ENCODE measurements at regions of chr1 and their contacts with region 1.

Region 1: DNA sequence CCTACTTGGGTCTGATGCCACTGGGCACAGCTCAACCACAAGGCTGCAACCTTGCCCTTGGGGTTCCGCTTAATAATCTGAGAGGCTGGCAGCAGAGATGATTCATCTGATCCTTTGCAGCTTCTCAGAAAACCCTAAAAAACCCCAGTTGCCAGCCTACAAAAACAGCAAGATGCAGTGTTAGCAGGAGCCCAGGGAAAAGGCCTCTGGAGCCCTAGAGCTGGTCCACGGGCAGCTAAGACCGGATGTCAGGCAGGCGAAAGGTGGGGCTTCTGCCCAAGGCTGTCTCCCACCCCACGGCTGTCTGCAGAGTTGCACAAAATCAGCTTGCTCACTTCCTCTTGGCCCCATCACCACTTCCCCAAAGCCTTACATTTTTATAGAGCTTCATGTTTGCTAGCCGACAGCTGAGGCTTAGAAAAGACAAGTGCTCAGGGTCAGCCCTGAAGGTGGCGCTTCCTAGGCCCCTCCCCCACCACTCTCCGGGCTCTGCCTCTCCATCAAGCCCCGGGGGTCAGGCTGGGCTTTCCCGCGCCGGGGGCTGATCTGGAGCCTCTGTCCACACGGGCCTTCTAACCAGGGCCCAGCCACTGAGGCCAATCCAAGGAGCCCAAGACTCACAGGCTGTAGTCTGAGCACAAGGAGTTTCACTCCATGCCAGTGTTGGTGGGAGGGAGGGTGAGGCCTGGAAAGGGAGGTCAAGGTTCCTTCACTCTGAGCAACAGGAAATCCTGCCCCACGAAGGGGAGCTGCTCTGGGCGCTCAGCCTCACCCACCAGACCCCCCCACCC is 4.2 kb upstream of the ADORA3 start:
- DNase-seq: peak; percentile 27 to 90
- H3K4me3 ChIP-seq: peak overlapping the region; percentile 6 to 59 (median 38); a peak in 7 of 8 replicates
- H3K27ac ChIP-seq: peak overlapping the region; percentile 67; the same call in 1 of the 2 replicates
- H3K4me1 ChIP-seq: peaks cover 0 to 9% (median 3%) of the 10 kb centered on the region in 4 experiments; a peak in 5 of 7 replicates
- H3K27me3 ChIP-seq: no peaks in the 10 kb centered on the region; a peak in 1 of 7 replicates
- CTCF ChIP-seq: peak; percentile 35 to 38 (median 36)
- EP300 ChIP-seq: no peak
- POLR2A ChIP-seq: 0 out of 3 replicates have a peak, but pooled peaks of 1 of the 2 experiments have one; percentile 10
- RAD21 ChIP-seq: peak; percentile 19 to 20; a peak in 1 of 4 replicates

Region 2: DNA sequence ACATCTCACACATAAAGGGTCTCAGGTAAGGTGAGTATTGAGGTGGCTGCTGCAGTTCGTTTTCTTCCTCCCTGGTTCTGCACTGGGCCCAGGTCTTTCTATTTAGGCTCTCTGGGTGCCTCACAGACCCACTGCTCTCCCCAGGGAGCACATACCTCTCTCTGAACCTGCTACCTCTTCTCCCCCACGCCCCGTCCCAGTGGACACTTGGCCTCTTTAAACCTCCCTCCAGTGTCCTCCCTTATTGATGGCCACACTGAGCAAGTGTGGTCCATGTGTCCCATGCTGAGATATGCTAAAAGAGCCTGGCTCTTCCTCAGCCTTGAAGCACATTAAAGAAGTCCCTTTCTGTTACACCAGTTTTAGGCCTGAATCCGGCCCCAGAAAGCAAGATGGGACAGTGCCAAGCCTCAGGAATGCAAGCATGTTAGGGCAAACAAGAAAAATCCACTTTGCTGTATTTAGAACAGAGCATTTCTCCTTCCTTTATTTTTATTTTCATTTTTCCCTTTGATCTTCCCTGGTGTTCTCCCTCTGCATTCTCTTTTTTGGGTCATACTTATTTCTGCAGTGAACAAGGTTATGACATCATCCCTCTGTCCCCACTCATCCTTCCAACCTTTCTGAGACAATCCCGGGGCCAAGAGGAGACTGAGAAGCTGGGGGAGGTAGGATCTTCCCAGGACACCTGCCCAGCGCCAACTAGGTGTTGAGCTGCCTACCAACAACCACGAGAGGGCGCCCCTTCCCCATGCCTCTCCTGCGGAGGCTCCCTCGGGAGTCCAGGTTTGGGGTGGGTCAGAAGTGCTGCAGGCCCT is 285.1 kb before region 1 on chr1:
- CTCF ChIA-PET with region 1: no interaction called
- POLR2A ChIA-PET with region 1: no interaction called
- DNase-seq: peak; percentile 46 to 94
- H3K4me3 ChIP-seq: no peak overlapping the region
- H3K27ac ChIP-seq: no peak overlapping the region
- H3K4me1 ChIP-seq: peaks cover 0 to 8% (median under 1%) of the 10 kb centered on the region in 4 experiments; a peak in 2 of 7 replicates
- H3K27me3 ChIP-seq: no peaks in the 10 kb centered on the region
- CTCF ChIP-seq: peak; percentile 95 to 98 (median 96)
- EP300 ChIP-seq: no peak
- POLR2A ChIP-seq: no peak
- RAD21 ChIP-seq: peak; percentile 99 to 100

Region 3: GRCh38 chr1:111417755-111418154 is 89.9 kb before region 1 on chr1:
- CTCF ChIA-PET with region 1: no interaction called
- POLR2A ChIA-PET with region 1: no interaction called
- DNase-seq: no peak
- H3K4me3 ChIP-seq: no peak overlapping the region
- H3K27ac ChIP-seq: no peak overlapping the region
- H3K4me1 ChIP-seq: no peaks in the 10 kb centered on the region
- H3K27me3 ChIP-seq: no peaks in the 10 kb centered on the region; a peak in 1 of 7 replicates
- CTCF ChIP-seq: no peak
- EP300 ChIP-seq: no peak
- POLR2A ChIP-seq: no peak
- RAD21 ChIP-seq: no peak

Region 4: DNA sequence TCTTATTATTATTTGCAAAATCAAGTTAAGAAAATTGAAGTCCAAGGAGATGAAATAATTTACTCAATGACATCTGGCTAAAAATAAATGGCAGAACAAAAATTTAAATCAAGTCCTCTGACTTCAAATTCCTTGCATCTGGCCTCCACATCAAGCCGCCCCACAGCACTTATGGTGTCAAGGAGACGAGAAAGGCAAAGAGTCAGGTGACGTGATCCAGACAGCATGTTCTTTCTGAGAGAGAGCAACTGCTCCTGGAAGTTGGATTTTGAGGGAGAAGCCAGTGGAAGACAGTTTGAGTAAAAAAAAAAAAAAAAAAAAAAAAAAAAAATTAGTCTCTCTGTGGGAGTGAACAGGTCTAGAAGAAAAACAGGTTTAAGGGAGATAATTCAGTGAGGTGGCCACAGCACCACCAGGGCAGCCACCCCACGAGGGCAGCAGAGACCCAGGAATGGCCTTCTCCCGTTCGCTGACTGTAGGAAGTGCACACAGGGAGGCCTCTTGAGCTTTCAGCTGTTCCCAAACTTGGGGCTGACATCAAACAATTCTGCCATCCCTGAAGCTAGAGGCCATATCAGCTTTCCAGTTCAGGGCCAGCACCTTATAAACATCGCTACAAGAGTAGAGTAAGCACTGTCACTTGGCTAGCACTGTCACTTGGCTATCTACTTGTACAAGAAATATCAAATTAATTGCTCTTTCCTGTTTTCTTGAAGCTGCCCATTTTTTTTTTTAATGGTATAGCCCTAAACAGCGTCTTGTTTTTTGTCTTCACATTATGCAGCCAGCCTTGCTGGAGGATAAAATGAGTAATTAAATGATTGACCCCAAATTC is 26.0 kb before region 1 on chr1:
- CTCF ChIA-PET with region 1: interaction called, 30 read pairs
- POLR2A ChIA-PET with region 1: interaction called, 3 read pairs
- DNase-seq: peak; percentile 43 to 75
- H3K4me3 ChIP-seq: no peak overlapping the region
- H3K27ac ChIP-seq: no peak overlapping the region
- H3K4me1 ChIP-seq: no peaks in the 10 kb centered on the region
- H3K27me3 ChIP-seq: no peaks in the 10 kb centered on the region
- CTCF ChIP-seq: peak; percentile 84 to 92 (median 84)
- EP300 ChIP-seq: no peak
- POLR2A ChIP-seq: no peak
- RAD21 ChIP-seq: peak; percentile 97

Region 5: DNA sequence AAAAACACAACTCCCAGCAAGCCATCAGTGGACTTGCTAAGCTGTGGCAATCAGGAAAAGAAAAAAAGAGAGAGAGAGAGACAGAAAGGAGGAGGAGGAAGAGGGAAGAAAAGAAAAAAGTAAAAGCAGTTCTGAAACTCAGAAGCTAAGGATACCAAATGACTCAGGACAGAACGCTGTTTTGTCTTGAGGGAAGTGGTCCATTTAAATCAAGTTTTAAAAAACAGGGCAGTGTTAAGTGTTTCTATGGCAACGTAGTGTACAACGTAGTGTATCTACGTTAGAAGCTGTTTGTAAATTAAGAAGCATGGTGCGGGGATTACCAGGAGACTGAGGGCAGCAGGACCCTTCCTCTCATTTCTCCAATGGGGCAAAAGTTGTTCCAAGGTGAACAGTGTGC is 10.0 kb before region 1 on chr1:
- CTCF ChIA-PET with region 1: interaction called, 21 read pairs
- POLR2A ChIA-PET with region 1: interaction called, 4 read pairs
- DNase-seq: no peak
- H3K4me3 ChIP-seq: no peak overlapping the region
- H3K27ac ChIP-seq: no peak overlapping the region
- H3K4me1 ChIP-seq: no peaks in the 10 kb centered on the region
- H3K27me3 ChIP-seq: no peaks in the 10 kb centered on the region
- CTCF ChIP-seq: no peak
- EP300 ChIP-seq: no peak
- POLR2A ChIP-seq: no peak
- RAD21 ChIP-seq: no peak

Region 6: DNA sequence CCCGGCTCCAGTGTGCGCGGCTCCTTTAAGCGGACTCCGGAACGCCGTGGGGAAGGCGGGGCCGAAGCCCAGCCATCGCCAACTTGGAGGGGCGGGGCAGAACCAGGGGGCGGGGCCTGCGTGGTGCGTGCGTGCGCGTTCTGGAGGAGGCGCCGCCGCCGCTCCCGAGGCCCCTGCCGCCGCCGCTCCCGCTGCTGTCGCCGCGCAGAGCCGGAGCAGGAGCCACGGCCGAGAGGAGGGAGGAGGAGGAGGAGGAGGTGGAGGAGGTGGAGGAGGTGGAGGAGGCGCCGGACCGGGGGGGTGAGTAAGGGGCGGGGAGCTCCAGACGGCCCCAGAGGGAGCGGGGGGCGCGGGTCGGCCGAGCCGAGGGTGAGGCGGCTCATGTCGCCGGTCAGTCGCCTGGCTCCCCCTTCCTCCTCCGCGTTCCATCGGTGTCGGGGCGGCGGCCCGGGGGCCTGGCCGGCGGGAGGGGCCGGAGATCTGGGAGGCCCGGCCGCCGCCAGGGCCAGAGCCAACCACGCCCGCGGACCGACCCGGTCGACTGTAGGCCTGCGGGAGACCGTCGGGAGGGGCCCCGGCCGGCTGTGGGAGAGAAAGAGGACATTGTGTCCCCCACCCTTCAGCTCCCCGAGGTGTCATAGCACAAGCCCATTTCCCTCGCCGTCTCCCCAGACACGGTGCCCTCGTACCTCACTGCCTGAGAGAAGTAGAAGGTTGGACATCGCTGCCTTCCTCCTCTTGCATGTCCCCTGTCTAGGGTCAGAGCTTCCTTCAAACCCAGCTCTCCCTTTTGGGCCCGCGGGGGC is 112.2 kb after region 1 on chr1 and contains the start of gene RAP1A:
- CTCF ChIA-PET with region 1: interaction called, 17 read pairs
- POLR2A ChIA-PET with region 1: interaction called, 4 read pairs
- DNase-seq: peak; percentile 77 to 94
- H3K4me3 ChIP-seq: peak within 1 kb of the TSS; percentile 71 to 97 (median 80)
- H3K27ac ChIP-seq: no peak within 1 kb of the TSS
- H3K4me1 ChIP-seq: peaks cover 0 to 5% (median 2%) of the 10 kb centered on the region in 4 experiments; a peak in 4 of 7 replicates
- H3K27me3 ChIP-seq: no peaks in the 10 kb centered on the region
- CTCF ChIP-seq: no peak
- EP300 ChIP-seq: no peak
- POLR2A ChIP-seq: peak in 1 of 2 experiments; percentile 31; a peak in 1 of 3 replicates
- RAD21 ChIP-seq: no peak
- total RNA-seq, gene RAP1A: 30.6 and 35.8 TPM in 2 replicates

Region 7: DNA sequence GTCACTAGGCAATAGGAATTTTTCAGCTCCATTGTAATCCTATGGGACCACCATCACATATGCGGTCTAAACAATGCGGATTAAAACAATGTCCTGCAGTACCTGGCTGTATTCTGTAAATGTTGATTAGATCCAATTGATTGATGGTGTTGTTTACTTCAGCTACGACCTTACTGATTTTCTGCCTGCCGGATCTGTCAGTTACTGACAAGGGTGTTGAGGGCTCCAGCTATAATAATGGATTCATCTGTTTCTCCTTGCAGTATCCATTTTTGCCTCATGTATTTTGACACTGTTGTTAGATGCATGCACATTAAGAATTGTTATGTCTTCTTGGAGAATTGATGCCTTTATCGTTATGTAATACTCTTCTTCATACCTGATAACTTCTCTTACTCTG is 151.0 kb after region 1 on chr1:
- CTCF ChIA-PET with region 1: interaction called, 15 read pairs
- POLR2A ChIA-PET with region 1: interaction called, 6 read pairs
- DNase-seq: no peak
- H3K4me3 ChIP-seq: no peak overlapping the region
- H3K27ac ChIP-seq: no peak overlapping the region
- H3K4me1 ChIP-seq: peaks cover 0 to 8% (median 0%) of the 10 kb centered on the region in 4 experiments; a peak in 2 of 7 replicates
- H3K27me3 ChIP-seq: no peaks in the 10 kb centered on the region
- CTCF ChIP-seq: no peak
- EP300 ChIP-seq: no peak
- POLR2A ChIP-seq: no peak
- RAD21 ChIP-seq: no peak

Region 8: DNA sequence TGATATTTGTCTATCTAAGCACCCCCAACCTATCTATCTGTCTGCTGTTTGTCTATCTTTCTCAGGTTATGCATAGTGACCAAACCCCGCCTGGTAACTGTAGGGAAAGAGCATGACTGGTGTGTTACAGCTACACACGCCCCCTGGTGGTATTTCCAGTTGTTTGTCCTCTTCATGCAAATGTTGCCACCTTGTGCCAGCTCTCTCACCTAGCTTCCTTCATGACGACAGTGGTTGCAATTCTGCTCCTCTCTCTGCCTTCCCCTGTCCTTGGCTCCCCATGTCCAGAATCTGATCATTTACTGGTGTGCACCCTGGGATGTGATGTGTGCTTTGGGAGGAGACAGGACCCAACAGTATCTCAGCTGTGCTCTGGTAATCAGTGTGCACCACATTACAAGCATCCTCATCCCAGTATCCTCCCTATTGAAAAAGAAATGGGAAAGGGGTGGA is 239.7 kb after region 1 on chr1:
- CTCF ChIA-PET with region 1: interaction called, 12 read pairs
- POLR2A ChIA-PET with region 1: no interaction called
- DNase-seq: peak in 1 of 2 experiments; percentile 70
- H3K4me3 ChIP-seq: no peak overlapping the region
- H3K27ac ChIP-seq: no peak overlapping the region
- H3K4me1 ChIP-seq: peaks cover 0 to 3% (median 0%) of the 10 kb centered on the region in 4 experiments; a peak in 4 of 7 replicates
- H3K27me3 ChIP-seq: no peaks in the 10 kb centered on the region; a peak in 1 of 7 replicates
- CTCF ChIP-seq: peak; percentile 71 to 98 (median 98)
- EP300 ChIP-seq: peak in 1 of 2 experiments; percentile 45; a peak in 1 of 3 replicates
- POLR2A ChIP-seq: no peak
- RAD21 ChIP-seq: peak; percentile 73 to 84

Region 9: DNA sequence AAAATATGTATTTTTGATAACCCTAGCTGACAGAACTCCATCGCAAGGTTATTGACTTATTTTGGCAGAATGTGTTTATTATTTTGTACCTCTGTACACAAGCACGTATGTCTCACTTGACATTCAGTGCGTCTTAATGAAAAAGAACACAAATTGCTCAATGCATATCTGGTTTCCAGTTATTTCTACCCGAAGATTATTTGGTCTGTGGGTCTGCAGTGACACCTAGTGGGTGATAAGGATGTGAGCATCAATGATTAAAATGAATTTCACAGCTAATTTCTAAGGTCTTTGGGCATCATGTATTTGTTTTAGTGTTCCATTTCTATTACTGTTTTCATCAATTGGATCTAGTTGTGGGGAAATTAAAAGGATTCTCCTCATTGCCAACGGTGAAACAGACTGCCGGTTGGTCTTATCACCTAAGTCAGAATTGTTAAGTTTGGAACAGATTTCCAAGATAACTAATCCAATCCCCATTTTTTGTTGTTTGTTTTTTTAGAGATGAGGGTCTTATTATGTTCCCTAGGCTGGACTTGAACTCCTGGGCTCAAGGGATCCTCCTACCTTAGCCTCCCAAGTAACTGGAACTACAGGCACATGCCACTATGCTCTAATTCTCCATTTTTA is 262.0 kb after region 1 on chr1:
- CTCF ChIA-PET with region 1: interaction called, 11 read pairs
- POLR2A ChIA-PET with region 1: interaction called, 3 read pairs
- DNase-seq: no peak
- H3K4me3 ChIP-seq: no peak overlapping the region
- H3K27ac ChIP-seq: no peak overlapping the region
- H3K4me1 ChIP-seq: no peaks in the 10 kb centered on the region
- H3K27me3 ChIP-seq: no peaks in the 10 kb centered on the region
- CTCF ChIP-seq: peak in 2 of 3 experiments; percentile 60 to 73; a peak in 2 of 4 replicates
- EP300 ChIP-seq: no peak
- POLR2A ChIP-seq: no peak
- RAD21 ChIP-seq: peak; percentile 81 to 83